Activated CD4-positive, alpha-beta memory T cell treated with anti-CD3 and anti-CD28 coated beads for 36 hours (primary cell): ENCODE measurements at regions of chr17 and their contacts with region 1.

Region 1: GRCh38 chr17:78723001-78723796 is 58.9 kb downstream of the CYTH1 start:
- DNase-seq: no peak
- H3K4me3 Mint-ChIP-seq: no peak overlapping the region
- H3K27ac Mint-ChIP-seq: peak overlapping the region; percentile 89
- H3K4me1 Mint-ChIP-seq: peaks cover 93% of the 10 kb centered on the region
- H3K27me3 Mint-ChIP-seq: no peaks in the 10 kb centered on the region

Region 2: DNA sequence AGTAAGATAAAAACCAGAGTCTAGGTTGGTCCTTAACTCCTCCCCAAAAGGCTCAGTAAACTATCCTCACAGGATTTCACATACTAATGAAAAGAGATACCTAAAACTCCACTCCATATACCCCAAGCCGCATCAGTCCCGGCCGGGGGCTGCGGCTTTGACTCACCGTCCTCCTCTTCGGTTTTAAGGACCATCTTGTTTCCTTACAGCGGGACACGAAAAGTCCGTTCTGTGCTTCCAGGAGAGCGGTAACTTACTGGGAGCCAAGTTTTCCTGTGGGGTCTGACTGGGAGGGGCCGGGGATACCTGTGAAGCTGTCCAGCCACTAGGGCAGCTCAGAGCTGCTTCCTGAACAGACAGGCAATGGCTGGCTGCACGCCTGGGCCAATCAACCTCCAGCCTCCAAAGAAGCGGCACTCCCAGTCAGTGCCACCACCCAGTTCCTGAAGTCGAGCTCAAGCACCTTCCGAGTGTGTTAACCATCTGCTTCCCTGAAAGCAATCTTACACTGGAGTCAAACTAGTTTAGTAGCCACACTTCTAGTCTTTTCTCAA is 13.4 kb after region 1 on chr17:
- CTCF ChIA-PET with region 1: interaction called, 10 read pairs
- POLR2A ChIA-PET with region 1: interaction called, 15 read pairs
- intact Hi-C with region 1: loop called (anchors 1 kb)
- DNase-seq: peak; percentile 80
- H3K4me3 Mint-ChIP-seq: peak overlapping the region; percentile 82
- H3K27ac Mint-ChIP-seq: peak overlapping the region; percentile 94
- H3K4me1 Mint-ChIP-seq: peaks cover 90% of the 10 kb centered on the region
- H3K27me3 Mint-ChIP-seq: no peaks in the 10 kb centered on the region

Region 3: GRCh38 chr17:78769196-78769773 is 46.1 kb after region 1 on chr17:
- CTCF ChIA-PET with region 1: interaction called, 3 read pairs
- POLR2A ChIA-PET with region 1: interaction called, 4 read pairs
- intact Hi-C with region 1: loop called (anchors 2 kb)
- DNase-seq: peak; percentile 62
- H3K4me3 Mint-ChIP-seq: no peak overlapping the region
- H3K27ac Mint-ChIP-seq: no peak overlapping the region
- H3K4me1 Mint-ChIP-seq: peaks cover 42% of the 10 kb centered on the region
- H3K27me3 Mint-ChIP-seq: no peaks in the 10 kb centered on the region